ENCODE measurements at regions of chr1 and their contacts with region 1.

Region 1: GRCh38 chr1:234978397-234979295 is 150.0 kb downstream of the TOMM20 start:
- DNase-seq: peak; percentile 85
- H3K4me3 ChIP-seq: no peak overlapping the region
- CTCF ChIP-seq: no peak

Region 2: GRCh38 chr1:235075188-235075926 is 96.7 kb after region 1 on chr1:
- in situ Hi-C with region 1: loop called (anchors 10 kb)
- DNase-seq: peak; percentile 92
- H3K4me3 ChIP-seq: no peak overlapping the region
- CTCF ChIP-seq: no peak